ENCODE measurements at regions of chr15 and their contacts with region 1.

Region 1: DNA sequence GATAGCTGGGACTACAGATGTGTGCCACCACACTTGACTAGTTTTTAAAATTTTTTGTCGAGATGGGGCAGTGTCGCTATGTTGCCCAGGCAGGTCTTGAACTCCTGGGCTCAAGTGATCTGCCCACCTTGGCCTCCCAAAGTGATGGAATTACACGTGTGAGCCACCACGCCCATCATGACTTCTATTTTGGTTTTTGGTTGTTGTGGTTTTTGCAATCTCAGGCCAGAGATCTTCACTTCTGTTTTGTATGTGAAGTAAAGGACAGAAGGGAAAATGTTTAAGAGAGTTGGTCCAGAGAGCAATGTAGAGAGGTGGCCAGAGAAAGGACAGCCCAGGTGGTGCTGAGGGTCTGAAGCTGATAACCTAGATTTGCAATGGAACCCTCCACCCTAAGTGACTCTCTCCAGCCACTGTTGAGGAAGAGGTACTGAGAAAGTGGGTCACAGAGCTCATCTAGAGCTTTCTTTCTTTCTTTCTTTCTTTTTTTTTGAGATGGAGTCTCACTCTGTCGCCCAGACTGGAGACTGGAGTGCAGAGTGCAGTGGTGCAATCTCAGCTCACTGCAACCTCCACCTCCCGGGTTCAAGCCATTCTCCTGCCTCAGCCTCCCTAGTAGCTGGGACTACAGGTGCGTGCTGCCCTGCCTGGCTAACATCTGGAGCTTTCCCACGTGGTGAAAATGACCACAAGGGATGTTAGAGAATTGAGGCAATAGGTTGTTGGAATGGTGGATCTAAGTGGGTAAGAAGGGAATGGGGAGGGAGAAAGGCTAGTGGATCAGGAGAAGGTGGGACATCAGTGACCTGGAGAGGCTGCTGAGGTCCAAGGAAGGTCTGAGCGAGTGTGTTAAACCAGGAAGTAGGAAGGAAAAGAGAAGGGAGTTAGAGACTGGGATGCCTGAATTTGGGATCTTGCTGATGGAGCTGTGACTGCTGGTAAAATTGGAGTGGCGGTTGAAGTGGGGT is 22.4 kb upstream of the SEMA4B start:
- DNase-seq: peak; percentile 64
- ATAC-seq: peak; percentile 87
- H3K4me3 ChIP-seq: peak overlapping the region; percentile 54
- H3K27ac ChIP-seq: peak overlapping the region; percentile 62
- H3K4me1 ChIP-seq: peaks cover 23% of the 10 kb centered on the region
- H3K27me3 ChIP-seq: no peaks in the 10 kb centered on the region
- CTCF ChIP-seq: no peak
- EP300 ChIP-seq: no peak
- POLR2A ChIP-seq: no peak
- RAD21 ChIP-seq: no peak

Region 2: DNA sequence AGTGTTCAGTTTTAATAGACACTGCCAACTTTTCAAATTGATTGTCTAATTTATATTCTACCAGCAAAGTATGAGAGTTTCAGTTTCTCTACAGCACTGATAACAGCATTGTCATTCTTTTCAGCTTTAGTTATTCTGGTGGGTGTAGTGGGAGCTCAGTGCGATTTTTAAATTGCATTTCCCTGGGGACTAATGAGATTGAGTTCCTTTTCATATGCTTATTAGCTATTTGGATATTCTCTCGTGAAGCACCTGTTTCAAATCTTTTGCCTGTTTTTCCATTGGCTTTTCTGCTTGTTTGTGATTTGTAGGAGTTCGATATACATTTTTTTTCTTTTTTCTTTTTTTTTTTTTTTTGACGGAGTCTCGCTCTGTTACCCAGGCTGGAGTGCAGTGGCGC is 57.7 kb before region 1 on chr15:
- CTCF ChIA-PET with region 1: no interaction called
- POLR2A ChIA-PET with region 1: no interaction called
- RAD21 ChIA-PET with region 1: no interaction called
- SMC1A ChIA-PET with region 1: no interaction called
- in situ Hi-C with region 1: no loop called
- intact Hi-C with region 1: loop called (anchors 2 kb)
- DNase-seq: no peak
- ATAC-seq: no peak
- H3K4me3 ChIP-seq: no peak overlapping the region
- H3K27ac ChIP-seq: no peak overlapping the region
- H3K4me1 ChIP-seq: no peaks in the 10 kb centered on the region
- H3K27me3 ChIP-seq: no peaks in the 10 kb centered on the region
- CTCF ChIP-seq: no peak
- EP300 ChIP-seq: no peak
- POLR2A ChIP-seq: no peak
- RAD21 ChIP-seq: no peak

Region 3: GRCh38 chr15:90191794-90192509 is 13.2 kb after region 1 on chr15:
- CTCF ChIA-PET with region 1: interaction called, 8 read pairs
- POLR2A ChIA-PET with region 1: interaction called, 8 read pairs
- RAD21 ChIA-PET with region 1: interaction called, 18 read pairs
- SMC1A ChIA-PET with region 1: interaction called, 22 read pairs
- in situ Hi-C with region 1: no loop called
- intact Hi-C with region 1: no loop called
- DNase-seq: peak; percentile 70
- ATAC-seq: peak; percentile 92
- H3K4me3 ChIP-seq: peak overlapping the region; percentile 57; the same call in 1 of the 2 replicates
- H3K27ac ChIP-seq: peak overlapping the region; percentile 65
- H3K4me1 ChIP-seq: peaks cover 41% of the 10 kb centered on the region
- H3K27me3 ChIP-seq: no peaks in the 10 kb centered on the region
- CTCF ChIP-seq: no peak
- EP300 ChIP-seq: no peak
- POLR2A ChIP-seq: peak; percentile 61
- RAD21 ChIP-seq: no peak